Dorsolateral prefrontal cortex (tissue), 120 donors: ENCODE measurements at regions of chr19 and their contacts with region 1.

Region 1: DNA sequence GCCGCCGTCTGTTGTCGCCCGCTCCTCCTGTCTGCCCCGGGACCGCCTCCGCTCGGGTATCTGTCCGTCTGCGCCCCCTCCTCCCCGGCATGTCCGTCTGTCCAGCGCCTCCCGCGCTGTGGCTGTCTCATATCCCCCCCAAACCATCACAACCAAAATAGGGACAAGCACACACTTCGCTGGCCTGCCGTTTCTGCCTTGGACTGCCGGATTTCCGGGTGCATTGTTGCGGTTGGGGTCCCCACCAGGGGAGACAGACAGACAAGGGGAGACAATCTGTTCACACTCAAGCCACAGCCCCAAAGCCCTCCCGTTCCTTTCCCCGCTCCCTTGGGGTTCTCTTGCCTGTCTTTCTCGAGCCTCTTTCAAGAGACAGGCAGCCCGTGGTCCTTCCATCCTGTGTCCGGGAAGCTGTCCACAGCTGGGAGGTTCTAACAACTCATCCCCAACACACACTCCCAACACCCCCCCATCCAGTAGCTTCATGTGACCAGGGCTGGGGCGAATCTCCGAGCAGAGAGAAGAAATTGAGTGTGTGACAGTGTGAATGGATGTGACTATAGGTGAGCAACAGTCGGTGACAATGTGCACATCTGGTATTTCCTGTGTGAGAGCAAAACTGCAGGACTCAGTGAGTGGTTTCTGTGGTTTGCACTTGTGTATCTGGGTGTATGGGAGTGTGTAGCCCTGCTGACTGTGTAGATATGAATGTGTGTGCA is 16.5 kb upstream of the FOSB start:
- DNase-seq: peak in 1 of 10 donors; percentile 55
- H3K4me3 ChIP-seq: peak overlapping the region; percentile 50 to 82 (median 69)
- H3K27ac ChIP-seq: peak overlapping the region in 34 of 59 donors; percentile 0 to 79 (median 52)
- H3K27me3 ChIP-seq: no peaks in the 10 kb centered on the region
- CTCF ChIP-seq: no peak

Region 2: GRCh38 chr19:45469132-45469944 is 18.0 kb after region 1 on chr19:
- intact Hi-C with region 1: loop called in 1 of 2 experiments (anchors 2 kb)
- DNase-seq: peak; percentile 78 to 97 (median 92)
- H3K4me3 ChIP-seq: peak overlapping the region; percentile 46 to 97 (median 77)
- H3K27ac ChIP-seq: peak overlapping the region; percentile 31 to 98 (median 92)
- H3K27me3 ChIP-seq: peaks cover 0 to 9% (median 0%) of the 10 kb centered on the region in 45 donors
- CTCF ChIP-seq: peak in 24 of 56 donors; percentile 7 to 49 (median 22)